CD8-positive, alpha-beta T cell (primary cell): ENCODE measurements at regions of chr6 and their contacts with region 1.

Region 1: DNA sequence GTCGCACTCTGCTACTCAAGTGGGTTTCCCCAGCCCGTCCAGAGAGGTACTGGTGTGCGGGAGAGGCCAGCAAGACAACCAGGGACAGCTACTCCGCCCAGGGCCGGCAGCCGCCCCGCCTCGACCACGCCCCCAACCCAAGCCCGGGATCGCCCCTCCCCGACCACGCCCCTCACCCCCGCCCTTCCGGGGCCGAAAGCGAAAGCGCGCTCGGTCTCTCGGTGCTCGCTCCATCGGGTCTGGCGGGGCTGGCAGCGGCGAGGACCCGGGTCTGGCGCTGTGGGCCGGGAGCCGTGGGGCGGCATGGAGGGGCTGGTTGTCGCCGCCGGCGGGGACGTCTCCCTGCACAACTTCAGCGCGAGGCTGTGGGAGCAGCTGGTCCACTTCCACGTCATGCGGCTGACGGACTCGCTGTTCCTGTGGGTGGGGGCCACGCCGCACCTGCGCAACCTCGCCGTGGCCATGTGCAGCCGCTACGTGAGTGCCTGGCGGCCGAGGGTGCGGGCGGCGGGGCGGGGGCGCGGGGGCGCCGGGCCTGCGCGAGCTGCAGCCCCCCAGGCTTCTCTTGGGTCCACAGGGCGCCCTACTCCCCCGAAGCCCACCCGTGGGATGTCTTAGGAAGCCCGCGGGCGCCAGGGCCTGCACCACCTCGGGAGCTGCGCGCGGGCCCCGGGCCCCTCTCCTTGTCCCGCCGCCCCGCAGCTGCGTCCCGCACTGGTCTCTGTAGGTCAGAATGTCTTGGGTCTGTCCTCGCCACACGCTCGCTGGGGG is at the start of gene PSMG4:
- DNase-seq: peak; percentile 85 to 96 (median 93)
- ATAC-seq: peak; percentile 82
- H3K4me3 ChIP-seq: peak within 1 kb of the TSS; percentile 81 to 82
- H3K4me3 Mint-ChIP-seq: peak within 1 kb of the TSS; percentile 95
- H3K27ac ChIP-seq: peak within 1 kb of the TSS; percentile 54 to 76
- H3K27ac Mint-ChIP-seq: peak within 1 kb of the TSS; percentile 94
- H3K4me1 ChIP-seq: peaks cover 37% of the 10 kb centered on the region
- H3K4me1 Mint-ChIP-seq: peaks cover 42% of the 10 kb centered on the region
- H3K27me3 ChIP-seq: no peaks in the 10 kb centered on the region
- H3K27me3 Mint-ChIP-seq: no peaks in the 10 kb centered on the region
- CTCF ChIP-seq: no peak
- total RNA-seq, gene PSMG4: 11.8 to 12.0 TPM

Region 2: DNA sequence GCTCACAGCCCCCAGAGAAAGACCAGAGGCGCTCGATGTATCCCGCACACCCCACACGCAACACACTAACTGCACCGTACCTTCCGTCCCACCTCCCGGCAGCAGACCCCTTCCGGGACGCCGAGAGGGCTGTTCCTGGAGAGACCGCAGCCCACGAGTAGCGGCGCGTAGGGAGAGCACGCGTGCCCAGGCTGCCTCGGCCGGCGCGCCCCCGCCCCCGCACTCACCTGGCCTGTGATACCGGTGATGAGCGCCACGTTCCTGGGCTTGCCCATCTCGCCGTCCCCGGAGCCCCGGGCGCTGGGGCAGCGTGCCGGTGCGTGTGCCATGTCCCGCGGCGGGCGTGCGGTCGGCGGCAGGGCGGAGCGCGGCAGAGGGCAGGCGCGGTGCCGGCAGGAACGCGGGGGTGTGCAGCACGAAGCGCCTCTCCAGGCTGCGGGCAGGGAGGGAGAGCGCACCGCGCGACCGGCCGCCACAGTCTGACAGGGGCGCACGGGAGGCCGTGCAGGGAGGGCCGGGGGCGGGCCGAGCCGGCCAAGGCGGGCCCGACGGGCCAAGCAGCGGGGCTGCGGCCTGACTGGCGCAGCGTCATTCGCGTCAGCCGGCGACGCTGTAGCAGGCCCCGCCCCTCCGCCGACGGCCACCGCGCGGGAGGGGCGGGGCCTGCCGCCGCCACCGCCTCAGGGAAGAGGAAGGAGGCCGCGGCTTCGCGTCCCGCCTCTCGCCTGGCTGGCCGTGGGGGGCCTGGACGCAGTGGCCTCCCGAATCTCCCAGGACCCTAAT is 1013.6 kb before region 1 on chr6 and contains the start of gene GMDS:
- CTCF ChIA-PET with region 1: no interaction called
- POLR2A ChIA-PET with region 1: no interaction called
- intact Hi-C with region 1: loop called in 1 of 2 experiments (anchors 5 kb)
- DNase-seq: peak; percentile 70 to 94 (median 80)
- ATAC-seq: peak; percentile 93
- H3K4me3 ChIP-seq: peak within 1 kb of the TSS; percentile 86 to 90
- H3K4me3 Mint-ChIP-seq: peak within 1 kb of the TSS; percentile 91
- H3K27ac ChIP-seq: peak within 1 kb of the TSS; percentile 81 to 86
- H3K27ac Mint-ChIP-seq: peak within 1 kb of the TSS; percentile 94
- H3K4me1 ChIP-seq: peaks cover 24% of the 10 kb centered on the region
- H3K4me1 Mint-ChIP-seq: peaks cover 61% of the 10 kb centered on the region
- H3K27me3 ChIP-seq: no peaks in the 10 kb centered on the region
- H3K27me3 Mint-ChIP-seq: no peaks in the 10 kb centered on the region
- CTCF ChIP-seq: no peak
- total RNA-seq, gene GMDS: 14.1 to 18.5 TPM

Region 3: DNA sequence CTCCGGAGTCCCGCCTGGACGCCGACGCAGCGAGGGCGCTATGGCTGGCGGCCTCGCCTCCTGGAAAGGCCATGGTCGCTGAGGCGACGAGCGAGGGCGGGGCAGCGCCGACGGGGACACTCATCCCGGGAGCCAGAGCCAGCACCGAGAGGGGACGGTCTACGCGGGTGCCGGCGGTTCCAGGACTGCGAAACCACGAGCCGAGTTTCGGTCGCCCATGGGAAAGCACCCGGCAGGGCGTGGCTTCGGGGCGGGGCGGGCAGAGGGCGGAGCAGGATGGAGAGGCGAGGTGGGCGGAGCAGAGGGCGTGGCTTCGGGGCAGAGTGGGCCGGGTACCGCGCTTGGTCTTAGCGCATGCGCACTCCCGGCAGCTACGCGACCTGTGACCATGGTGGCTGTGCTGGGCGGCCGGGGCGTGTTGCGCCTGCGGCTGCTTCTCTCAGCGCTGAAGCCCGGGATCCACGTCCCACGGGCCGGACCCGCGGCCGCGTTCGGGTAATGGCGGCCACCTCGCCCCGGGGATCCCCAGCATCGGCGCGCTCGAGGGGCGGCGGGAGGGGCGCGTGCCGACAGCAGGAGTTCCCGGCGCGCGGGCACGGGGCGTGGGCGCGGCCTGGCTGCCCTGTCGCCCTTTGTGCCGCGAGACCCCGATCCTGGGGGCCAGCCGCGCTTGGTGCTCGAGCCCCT is 140.4 kb before region 1 on chr6 and contains the start of gene BPHL:
- CTCF ChIA-PET with region 1: interaction called, 4 read pairs
- POLR2A ChIA-PET with region 1: interaction called, 4 read pairs
- intact Hi-C with region 1: loop called (anchors 1 to 2 kb)
- DNase-seq: peak; percentile 97 to 100 (median 99)
- ATAC-seq: peak; percentile 95
- H3K4me3 ChIP-seq: peak within 1 kb of the TSS; percentile 63 to 80
- H3K4me3 Mint-ChIP-seq: peak within 1 kb of the TSS; percentile 92
- H3K27ac ChIP-seq: peak within 1 kb of the TSS; percentile 85 to 90
- H3K27ac Mint-ChIP-seq: peak within 1 kb of the TSS; percentile 96
- H3K4me1 ChIP-seq: peaks cover 12% of the 10 kb centered on the region
- H3K4me1 Mint-ChIP-seq: peaks cover 13% of the 10 kb centered on the region
- H3K27me3 ChIP-seq: no peaks in the 10 kb centered on the region
- H3K27me3 Mint-ChIP-seq: no peaks in the 10 kb centered on the region
- CTCF ChIP-seq: no peak
- total RNA-seq, gene BPHL: 3.7 to 5.5 TPM

Region 4: DNA sequence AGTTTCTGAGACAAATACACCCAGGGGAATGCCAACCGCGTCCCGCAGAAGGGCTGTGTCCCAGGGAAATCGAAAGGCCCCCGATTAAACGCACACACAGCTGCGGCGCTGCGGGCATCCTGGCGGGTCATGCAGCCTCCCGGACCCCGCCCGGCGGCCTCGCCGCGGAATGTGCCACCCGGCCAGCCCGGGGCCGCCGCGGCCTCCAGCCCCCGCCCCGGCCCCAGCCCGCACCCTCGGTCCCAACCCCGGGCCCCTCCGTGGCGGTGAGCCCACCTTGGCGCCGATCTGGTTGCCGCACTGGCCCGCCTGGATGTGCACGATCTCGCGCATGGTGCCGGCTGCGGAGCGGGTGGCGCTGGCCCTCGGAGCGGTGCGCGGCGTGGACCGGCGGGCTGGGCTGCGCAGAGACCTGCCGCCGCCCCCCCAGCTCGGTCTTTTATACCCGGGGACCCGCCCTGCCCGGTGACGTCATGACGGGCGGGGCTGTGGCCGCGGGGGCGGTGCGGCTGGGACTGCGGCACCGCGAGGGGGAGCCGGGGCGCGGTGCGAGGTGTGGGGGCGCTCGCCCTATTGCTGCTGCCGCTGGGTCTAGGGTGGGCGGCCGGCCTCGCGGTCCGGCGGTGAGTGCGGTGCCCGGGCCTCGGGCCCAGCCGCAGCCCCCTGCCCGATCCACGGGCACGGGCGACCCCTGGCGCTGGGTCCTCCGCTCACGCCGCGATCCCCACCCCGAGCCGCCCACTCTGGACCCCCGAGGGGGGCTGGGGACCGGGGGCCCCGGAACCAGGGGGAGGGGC is 101.6 kb before region 1 on chr6 and contains the start of gene TUBB2A:
- CTCF ChIA-PET with region 1: no interaction called
- POLR2A ChIA-PET with region 1: no interaction called
- intact Hi-C with region 1: loop called (anchors 1 to 2 kb)
- DNase-seq: peak; percentile 77 to 94 (median 88)
- ATAC-seq: peak; percentile 61
- H3K4me3 ChIP-seq: peak within 1 kb of the TSS; percentile 65
- H3K4me3 Mint-ChIP-seq: peak within 1 kb of the TSS; percentile 92
- H3K27ac ChIP-seq: peak within 1 kb of the TSS; percentile 73 to 84
- H3K27ac Mint-ChIP-seq: peak within 1 kb of the TSS; percentile 91
- H3K4me1 ChIP-seq: peaks cover 29% of the 10 kb centered on the region
- H3K4me1 Mint-ChIP-seq: peaks cover 36% of the 10 kb centered on the region
- H3K27me3 ChIP-seq: no peaks in the 10 kb centered on the region
- H3K27me3 Mint-ChIP-seq: peaks cover 2% of the 10 kb centered on the region
- CTCF ChIP-seq: peak; percentile 65
- total RNA-seq, gene TUBB2A: 61.4 to 63.9 TPM

Region 5: DNA sequence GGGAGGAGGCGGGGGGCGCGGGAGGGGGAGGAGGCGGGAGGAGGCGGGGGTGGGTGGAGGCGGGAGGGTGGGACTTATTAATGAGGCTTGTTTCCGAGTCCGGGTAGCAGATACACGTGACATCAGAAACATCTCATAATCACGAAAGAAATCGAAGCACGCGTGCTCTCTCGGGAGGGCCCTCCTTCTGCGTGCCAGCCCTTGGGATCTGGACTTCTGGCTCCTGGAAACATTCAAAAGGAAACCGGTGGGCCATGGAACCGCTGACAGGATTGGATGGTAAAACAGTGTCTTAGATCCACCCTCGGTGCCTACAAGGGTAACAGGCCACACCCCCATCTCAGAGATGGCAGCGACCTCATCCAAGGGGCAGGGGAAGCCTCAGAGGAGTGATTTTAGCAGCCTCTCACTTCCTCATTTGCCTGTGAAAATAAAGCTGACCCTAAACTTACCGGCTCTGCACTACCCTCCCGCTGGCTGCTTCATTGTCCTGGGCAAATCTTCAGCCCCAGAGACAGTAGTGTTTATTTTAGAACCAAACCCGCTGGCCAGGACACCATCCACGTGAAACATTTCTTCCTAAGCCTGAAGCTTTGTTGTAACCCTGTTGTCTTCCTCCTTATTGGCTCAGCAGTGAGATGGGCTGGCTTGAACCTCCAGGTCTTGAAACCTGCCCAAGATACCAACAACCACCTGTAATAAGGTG is 97.3 kb after region 1 on chr6:
- CTCF ChIA-PET with region 1: no interaction called
- POLR2A ChIA-PET with region 1: no interaction called
- intact Hi-C with region 1: loop called (anchors 2 to 5 kb)
- DNase-seq: peak; percentile 35 to 90 (median 66)
- ATAC-seq: peak; percentile 87
- H3K4me3 ChIP-seq: peak overlapping the region; percentile 51 to 58
- H3K4me3 Mint-ChIP-seq: peak overlapping the region; percentile 81
- H3K27ac ChIP-seq: peak overlapping the region; percentile 48 to 79
- H3K27ac Mint-ChIP-seq: peak overlapping the region; percentile 90
- H3K4me1 ChIP-seq: peaks cover 27% of the 10 kb centered on the region
- H3K4me1 Mint-ChIP-seq: peaks cover 33% of the 10 kb centered on the region
- H3K27me3 ChIP-seq: no peaks in the 10 kb centered on the region
- H3K27me3 Mint-ChIP-seq: no peaks in the 10 kb centered on the region
- CTCF ChIP-seq: no peak

Region 6: GRCh38 chr6:3919130-3919628 is 660.3 kb after region 1 on chr6:
- CTCF ChIA-PET with region 1: no interaction called
- POLR2A ChIA-PET with region 1: no interaction called
- intact Hi-C with region 1: no loop called
- DNase-seq: no peak
- ATAC-seq: no peak
- H3K4me3 ChIP-seq: no peak overlapping the region
- H3K4me3 Mint-ChIP-seq: no peak overlapping the region
- H3K27ac ChIP-seq: no peak overlapping the region
- H3K27ac Mint-ChIP-seq: no peak overlapping the region
- H3K4me1 ChIP-seq: peaks cover 19% of the 10 kb centered on the region
- H3K4me1 Mint-ChIP-seq: peaks cover 21% of the 10 kb centered on the region
- H3K27me3 ChIP-seq: no peaks in the 10 kb centered on the region
- H3K27me3 Mint-ChIP-seq: peaks cover 7% of the 10 kb centered on the region
- CTCF ChIP-seq: no peak

Region 7: GRCh38 chr6:5003604-5004372 is 1744.9 kb after region 1 on chr6 and contains the start of gene RPP40:
- CTCF ChIA-PET with region 1: no interaction called
- POLR2A ChIA-PET with region 1: no interaction called
- intact Hi-C with region 1: loop called (anchors 5 kb)
- DNase-seq: peak; percentile 97 to 99 (median 98)
- ATAC-seq: peak; percentile 94
- H3K4me3 ChIP-seq: peak within 1 kb of the TSS; percentile 80 to 95
- H3K4me3 Mint-ChIP-seq: peak within 1 kb of the TSS; percentile 94
- H3K27ac ChIP-seq: peak within 1 kb of the TSS; percentile 79 to 82
- H3K27ac Mint-ChIP-seq: peak within 1 kb of the TSS; percentile 97
- H3K4me1 ChIP-seq: peaks cover 8% of the 10 kb centered on the region
- H3K4me1 Mint-ChIP-seq: peaks cover 13% of the 10 kb centered on the region
- H3K27me3 ChIP-seq: no peaks in the 10 kb centered on the region
- H3K27me3 Mint-ChIP-seq: no peaks in the 10 kb centered on the region
- CTCF ChIP-seq: peak; percentile 84
- total RNA-seq, gene RPP40: 0.94 to 1.2 TPM